ENCODE measurements at regions of chr1 and their contacts with region 1.

Region 1: GRCh38 chr1:198681831-198682759 is 43.3 kb downstream of the PTPRC start:
- DNase-seq: peak; percentile 95
- ATAC-seq: peak; percentile 65
- H3K4me3 Mint-ChIP-seq: peak overlapping the region; percentile 75
- H3K27ac Mint-ChIP-seq: peak overlapping the region; percentile 93
- H3K4me1 Mint-ChIP-seq: peaks cover 83% of the 10 kb centered on the region
- H3K27me3 Mint-ChIP-seq: no peaks in the 10 kb centered on the region

Region 2: GRCh38 chr1:198520524-198521254 is 161.4 kb before region 1 on chr1:
- CTCF ChIA-PET with region 1: interaction called, 11 read pairs
- DNase-seq: no peak
- ATAC-seq: peak; percentile 71
- H3K4me3 Mint-ChIP-seq: peak overlapping the region; percentile 57
- H3K27ac Mint-ChIP-seq: peak overlapping the region; percentile 80
- H3K4me1 Mint-ChIP-seq: peaks cover 61% of the 10 kb centered on the region
- H3K27me3 Mint-ChIP-seq: no peaks in the 10 kb centered on the region

Region 3: GRCh38 chr1:198669023-198669698 is 12.9 kb before region 1 on chr1:
- CTCF ChIA-PET with region 1: interaction called, 11 read pairs
- DNase-seq: peak; percentile 71
- ATAC-seq: peak; percentile 82
- H3K4me3 Mint-ChIP-seq: peak overlapping the region; percentile 33
- H3K27ac Mint-ChIP-seq: peak overlapping the region; percentile 89
- H3K4me1 Mint-ChIP-seq: peaks cover 87% of the 10 kb centered on the region
- H3K27me3 Mint-ChIP-seq: no peaks in the 10 kb centered on the region

Region 4: DNA sequence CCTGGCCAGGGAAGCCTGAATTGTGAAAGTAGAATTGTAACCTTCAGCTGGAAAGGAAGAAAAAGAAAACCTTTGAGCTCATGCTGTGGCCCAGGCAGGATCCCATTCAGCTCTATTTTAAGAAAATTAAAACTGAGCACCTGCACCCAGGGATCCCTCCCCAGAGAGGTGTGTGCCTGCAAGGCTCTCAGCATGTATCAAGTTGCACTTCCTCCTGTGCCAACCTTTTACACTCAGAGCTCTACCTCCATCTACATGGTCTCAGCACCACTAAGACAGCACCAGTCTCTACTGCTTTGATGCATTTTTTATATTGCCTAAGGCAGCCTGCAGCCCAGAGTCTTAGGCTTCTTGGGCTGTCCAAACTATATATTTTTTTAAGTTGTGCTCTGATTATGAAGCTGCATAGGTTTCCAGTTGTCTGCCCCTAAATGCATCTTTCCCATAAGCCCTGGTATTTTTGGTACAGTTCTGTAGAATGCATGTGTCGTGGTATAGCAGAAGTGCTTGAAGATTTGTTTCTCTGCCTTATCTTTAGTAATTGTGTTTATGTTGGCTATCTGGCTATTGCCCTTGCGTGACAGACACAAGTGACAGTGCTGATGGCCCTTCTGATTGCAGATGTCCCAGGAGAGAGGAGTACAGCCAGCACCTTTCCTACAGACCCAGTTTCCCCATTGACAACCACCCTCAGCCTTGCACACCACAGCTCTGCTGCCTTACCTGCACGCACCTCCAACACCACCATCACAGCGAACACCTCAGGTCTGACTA is 19.9 kb after region 1 on chr1:
- CTCF ChIA-PET with region 1: interaction called, 13 read pairs
- DNase-seq: no peak
- ATAC-seq: no peak
- H3K4me3 Mint-ChIP-seq: no peak overlapping the region
- H3K27ac Mint-ChIP-seq: peak overlapping the region; percentile 69
- H3K4me1 Mint-ChIP-seq: peaks cover 70% of the 10 kb centered on the region
- H3K27me3 Mint-ChIP-seq: no peaks in the 10 kb centered on the region

Region 5: GRCh38 chr1:198713081-198713480 is 31.0 kb after region 1 on chr1:
- CTCF ChIA-PET with region 1: no interaction called
- DNase-seq: no peak
- ATAC-seq: peak; percentile 28
- H3K4me3 Mint-ChIP-seq: no peak overlapping the region
- H3K27ac Mint-ChIP-seq: peak overlapping the region; percentile 44
- H3K4me1 Mint-ChIP-seq: peaks cover 30% of the 10 kb centered on the region
- H3K27me3 Mint-ChIP-seq: no peaks in the 10 kb centered on the region

Measured in activated CD8-positive, alpha-beta memory T cell treated with anti-CD3 and anti-CD28 coated beads, Interleukin-2, amount 10 ng/mL, durations not matched to agents 7 days and 5 days (primary cell).